Activated CD8-positive, alpha-beta memory T cell treated with anti-CD3 and anti-CD28 coated beads, Interleukin-2, amount 10 ng/mL, durations not matched to agents 7 days and 5 days (primary cell): ENCODE measurements at regions of chr16 and their contacts with region 1.

Region 1: DNA sequence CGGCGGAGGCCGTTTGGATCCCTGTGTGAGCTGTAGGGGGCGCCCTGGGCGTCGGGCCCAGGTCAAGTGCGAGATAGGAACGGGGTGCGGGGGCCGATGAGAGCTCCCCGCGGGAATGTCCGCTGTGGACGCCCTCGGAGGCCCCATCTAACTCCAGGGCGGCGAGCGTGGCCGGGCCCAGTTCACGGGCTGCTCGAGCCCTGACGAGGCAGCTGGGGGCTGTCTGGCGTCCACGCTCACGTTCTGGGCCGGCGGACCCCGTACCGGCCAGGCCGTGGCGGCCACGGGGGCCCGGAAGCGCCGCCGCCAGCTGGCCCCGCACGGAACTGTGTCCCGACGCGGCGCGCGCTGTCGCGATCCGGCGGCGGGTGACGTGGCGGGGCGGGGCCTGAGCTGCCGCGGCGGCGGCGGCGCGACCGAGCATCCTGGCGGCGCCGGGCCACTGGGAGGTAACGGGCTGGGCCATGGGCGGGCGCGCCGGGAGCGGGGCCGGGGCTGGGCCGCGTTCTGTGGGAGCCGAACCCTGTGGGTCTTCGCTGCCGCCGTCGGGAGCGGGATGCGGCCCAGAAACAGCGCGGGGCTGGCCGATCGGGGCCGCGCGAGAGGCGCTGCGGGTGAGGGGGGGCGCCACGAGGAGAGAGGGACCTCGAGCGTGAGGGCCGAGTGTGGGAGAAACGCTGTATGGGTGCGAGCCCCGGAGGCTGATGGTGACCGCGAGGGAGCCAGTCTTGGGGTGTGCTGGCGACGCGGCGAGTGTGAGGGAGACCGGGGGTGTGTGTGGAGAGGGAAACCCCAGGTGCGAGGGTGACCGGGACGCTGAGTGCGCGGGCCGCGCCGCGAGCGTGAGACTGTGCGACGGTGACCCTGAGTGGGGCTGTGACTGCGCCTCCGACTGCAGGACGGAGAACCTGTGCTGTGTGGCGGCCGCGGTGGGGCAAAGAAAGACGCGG is at the start of gene SLC7A6:
- DNase-seq: peak; percentile 87
- ATAC-seq: peak; percentile 84
- H3K4me3 Mint-ChIP-seq: peak within 1 kb of the TSS; percentile 94
- H3K27ac Mint-ChIP-seq: peak within 1 kb of the TSS; percentile 98
- H3K4me1 Mint-ChIP-seq: peaks cover 53% of the 10 kb centered on the region
- H3K27me3 Mint-ChIP-seq: no peaks in the 10 kb centered on the region
- total RNA-seq, gene SLC7A6: 73.3 to 99.5 TPM

Region 2: DNA sequence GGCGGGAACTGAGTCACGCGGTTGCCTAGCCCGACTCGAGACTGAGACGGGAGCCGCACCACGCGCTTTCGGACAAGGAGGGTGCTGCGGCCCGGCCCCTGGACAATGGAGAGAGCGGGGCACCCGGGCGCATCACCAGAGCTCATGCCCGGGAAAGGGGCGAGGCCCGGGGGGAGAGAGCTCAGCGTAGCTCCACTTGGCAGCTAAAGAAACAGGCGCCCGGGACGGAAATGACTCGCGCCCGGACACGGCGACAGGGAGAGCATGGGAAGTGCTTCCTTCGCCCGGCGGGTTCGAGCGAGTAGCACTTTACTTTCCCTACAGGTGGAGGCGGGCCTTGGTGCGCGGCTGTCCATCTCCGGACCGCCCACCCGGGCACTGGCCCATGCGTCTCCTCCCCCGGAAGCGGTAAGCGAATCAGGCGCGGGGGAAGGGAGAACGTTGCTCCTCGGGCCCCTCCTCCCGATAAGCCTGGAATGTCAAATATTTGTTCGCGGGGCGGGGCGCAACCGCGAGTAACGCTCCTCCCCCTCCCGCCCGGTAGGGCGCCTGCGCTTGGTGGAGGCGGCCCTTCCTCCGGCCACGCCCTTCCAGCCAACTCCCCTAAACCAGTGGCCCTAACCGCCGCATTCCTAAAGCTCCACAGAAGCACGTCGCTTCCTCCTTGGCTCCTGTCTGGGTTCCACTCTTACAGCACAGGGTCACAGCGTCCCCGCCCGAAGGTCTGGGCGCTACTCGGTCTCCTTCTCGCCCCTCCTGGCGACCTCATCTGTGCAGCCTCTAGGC is 27.0 kb before region 1 on chr16:
- CTCF ChIA-PET with region 1: interaction called, 15 read pairs
- DNase-seq: peak; percentile 94
- ATAC-seq: peak; percentile 84
- H3K4me3 Mint-ChIP-seq: peak overlapping the region; percentile 82
- H3K27ac Mint-ChIP-seq: peak overlapping the region; percentile 90
- H3K4me1 Mint-ChIP-seq: peaks cover 34% of the 10 kb centered on the region
- H3K27me3 Mint-ChIP-seq: peaks cover 8% of the 10 kb centered on the region

Region 3: DNA sequence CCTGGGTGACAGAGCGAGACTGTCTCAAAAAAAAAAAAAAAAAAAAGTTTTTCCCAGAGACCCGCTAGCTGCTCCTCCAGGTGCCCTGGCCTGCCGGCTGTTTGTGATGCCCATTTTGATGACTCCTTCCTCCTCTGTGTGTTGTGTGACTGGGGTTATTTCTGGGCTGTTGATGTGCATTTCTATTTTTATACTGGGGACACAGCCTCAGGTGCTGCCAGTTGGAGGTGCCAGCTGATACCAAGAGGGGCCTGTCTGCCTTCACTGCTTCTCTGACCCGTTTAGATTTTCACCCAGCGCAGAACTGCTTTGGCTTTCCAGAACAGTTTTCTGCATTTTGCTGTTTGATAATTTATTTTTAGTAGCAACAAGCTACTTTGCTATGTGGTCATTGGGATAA is 12.6 kb before region 1 on chr16:
- CTCF ChIA-PET with region 1: interaction called, 56 read pairs
- DNase-seq: no peak
- ATAC-seq: no peak
- H3K4me3 Mint-ChIP-seq: no peak overlapping the region
- H3K27ac Mint-ChIP-seq: no peak overlapping the region
- H3K4me1 Mint-ChIP-seq: peaks cover under 1% of the 10 kb centered on the region
- H3K27me3 Mint-ChIP-seq: no peaks in the 10 kb centered on the region

Region 4: GRCh38 chr16:68289621-68290329 is 25.4 kb after region 1 on chr16:
- CTCF ChIA-PET with region 1: interaction called, 200 read pairs
- DNase-seq: peak; percentile 79
- ATAC-seq: peak; percentile 76
- H3K4me3 Mint-ChIP-seq: peak overlapping the region; percentile 4
- H3K27ac Mint-ChIP-seq: peak overlapping the region; percentile 84
- H3K4me1 Mint-ChIP-seq: peaks cover 68% of the 10 kb centered on the region
- H3K27me3 Mint-ChIP-seq: no peaks in the 10 kb centered on the region

Region 5: GRCh38 chr16:68310761-68311511 is 46.5 kb after region 1 on chr16 and contains the starts of genes PRMT7 and SLC7A6OS:
- CTCF ChIA-PET with region 1: interaction called, 71 read pairs
- DNase-seq: peak; percentile 96
- ATAC-seq: peak; percentile 99
- H3K4me3 Mint-ChIP-seq: peak within 1 kb of the TSS; percentile 85
- H3K27ac Mint-ChIP-seq: peak within 1 kb of the TSS; percentile 85
- H3K4me1 Mint-ChIP-seq: peaks cover 52% of the 10 kb centered on the region
- H3K27me3 Mint-ChIP-seq: no peaks in the 10 kb centered on the region
- total RNA-seq, gene PRMT7: 60.9 to 73.9 TPM
- total RNA-seq, gene SLC7A6OS: 29.8 to 30.8 TPM

Region 6: DNA sequence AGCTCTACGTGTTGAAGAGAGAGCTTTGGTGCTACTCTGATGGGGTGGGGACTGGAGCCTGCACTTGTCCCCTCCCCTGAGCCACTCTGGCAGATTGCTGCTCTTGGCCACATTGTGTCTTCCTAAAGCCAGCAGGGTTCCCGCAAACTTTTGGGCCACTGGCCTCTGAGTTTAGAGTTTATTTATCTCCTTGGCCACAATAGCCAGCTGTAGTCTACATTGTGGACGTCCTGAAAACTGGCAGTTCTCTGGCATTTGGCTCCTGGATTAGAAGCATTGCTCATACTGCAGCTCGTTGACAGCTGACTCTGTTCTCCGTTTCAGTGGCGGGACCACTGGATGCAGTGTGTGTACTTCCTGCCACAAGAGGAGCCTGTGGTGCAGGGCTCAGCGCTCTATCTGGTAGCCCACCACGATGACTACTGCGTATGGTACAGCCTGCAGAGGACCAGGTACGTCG is 81.0 kb after region 1 on chr16:
- CTCF ChIA-PET with region 1: interaction called, 12 read pairs
- DNase-seq: peak; percentile 87
- ATAC-seq: peak; percentile 96
- H3K4me3 Mint-ChIP-seq: peak overlapping the region; percentile 17
- H3K27ac Mint-ChIP-seq: peak overlapping the region; percentile 67
- H3K4me1 Mint-ChIP-seq: peaks cover 31% of the 10 kb centered on the region
- H3K27me3 Mint-ChIP-seq: no peaks in the 10 kb centered on the region

Region 7: GRCh38 chr16:68367030-68367429 is 102.6 kb after region 1 on chr16:
- CTCF ChIA-PET with region 1: interaction called, 10 read pairs
- DNase-seq: peak; percentile 66
- ATAC-seq: peak; percentile 41
- H3K4me3 Mint-ChIP-seq: no peak overlapping the region
- H3K27ac Mint-ChIP-seq: no peak overlapping the region
- H3K4me1 Mint-ChIP-seq: peaks cover 42% of the 10 kb centered on the region
- H3K27me3 Mint-ChIP-seq: peaks cover 23% of the 10 kb centered on the region